GM10248 (cell line): ENCODE measurements at regions of chr10 and their contacts with region 1.

Region 1: DNA sequence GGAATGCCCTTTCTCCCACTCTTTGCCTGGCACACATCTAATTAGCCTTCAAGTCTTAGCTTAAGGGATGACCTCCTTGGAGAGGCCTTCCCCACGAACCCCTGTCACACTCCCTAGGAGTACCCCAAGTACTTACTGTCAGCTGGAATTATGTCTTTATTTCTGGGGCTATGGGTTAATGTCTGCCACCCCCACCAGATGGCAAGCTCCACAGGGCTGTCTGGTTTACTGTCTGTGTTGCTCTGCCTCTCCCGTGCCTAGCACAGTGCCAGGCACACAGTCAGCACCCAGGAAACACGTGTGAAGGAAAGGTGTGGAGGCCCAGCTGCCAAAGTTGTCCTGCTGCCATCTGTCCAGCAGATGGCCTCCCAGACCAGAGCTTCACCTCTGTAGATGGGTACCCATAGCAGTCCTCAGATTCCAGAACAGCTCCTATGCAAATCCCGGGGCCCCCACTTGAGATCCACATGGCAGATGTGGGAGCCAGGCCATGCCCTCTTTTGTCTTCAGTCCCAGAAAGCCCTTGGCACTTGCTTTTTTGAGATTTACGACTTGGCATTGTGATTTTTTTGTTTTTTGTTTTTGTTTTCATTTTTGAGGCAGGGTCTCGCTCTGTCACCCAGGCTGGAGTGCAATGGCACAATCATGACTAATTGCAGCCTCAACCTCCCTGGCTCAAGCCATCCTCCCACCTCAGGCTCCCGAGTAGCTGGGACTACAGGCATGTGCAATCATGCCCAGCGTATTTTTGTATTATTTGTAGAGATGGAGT is 17.2 kb upstream of the PALD1 start:
- DNase-seq: peak; percentile 81
- CTCF ChIP-seq: peak; percentile 80

Region 2: DNA sequence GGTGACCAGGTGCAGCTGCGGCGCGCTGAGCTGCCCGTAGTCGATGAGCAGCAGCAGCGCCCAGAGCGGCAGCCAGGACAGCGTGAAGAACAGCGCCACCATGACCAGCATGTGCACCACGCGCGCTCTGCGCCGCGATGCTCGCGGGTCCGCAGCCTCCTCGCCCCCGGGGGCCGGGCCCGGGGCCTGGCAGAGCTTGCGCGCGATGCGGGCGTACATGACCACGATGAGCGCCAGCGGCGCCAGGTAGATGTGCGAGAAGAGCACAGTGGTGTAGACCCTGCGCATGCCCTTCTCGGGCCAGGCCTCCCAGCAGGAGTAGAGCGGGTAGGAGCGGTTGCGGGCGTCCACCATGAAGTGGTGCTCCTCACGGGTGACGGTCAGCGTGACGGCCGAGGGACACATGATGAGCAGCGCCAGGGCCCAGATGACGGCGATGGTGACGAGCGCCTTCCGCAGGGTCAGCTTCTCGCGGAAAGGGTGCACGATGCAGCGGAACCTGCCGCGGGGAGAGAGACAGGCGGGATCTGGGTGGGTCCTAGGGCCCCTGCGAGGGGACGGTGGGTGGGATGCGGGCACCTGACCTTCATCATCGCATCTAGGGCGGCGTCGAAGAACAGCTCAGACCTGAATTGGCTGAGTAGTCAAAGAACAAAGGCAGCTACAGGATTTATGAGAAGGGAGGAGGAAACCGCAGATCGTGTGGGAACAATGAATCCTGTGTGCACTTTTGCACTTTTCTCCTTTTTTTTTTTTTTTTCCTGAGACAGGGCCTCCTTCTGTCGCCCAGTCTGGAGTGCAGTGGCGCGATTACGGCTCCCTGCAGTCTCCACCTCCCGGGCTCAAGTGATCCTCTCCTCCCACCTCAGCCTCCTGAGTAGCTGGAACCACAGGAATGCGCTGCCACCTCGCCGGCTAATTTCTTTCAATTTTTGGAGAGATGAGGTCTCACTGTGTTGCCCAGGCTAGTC is 205.8 kb before region 1 on chr10:
- CTCF ChIA-PET with region 1: no interaction called
- POLR2A ChIA-PET with region 1: no interaction called
- DNase-seq: peak; percentile 40
- CTCF ChIP-seq: no peak

Region 3: GRCh38 chr10:70448236-70448635 is 13.2 kb before region 1 on chr10:
- CTCF ChIA-PET with region 1: interaction called, 19 read pairs
- POLR2A ChIA-PET with region 1: no interaction called
- DNase-seq: no peak
- CTCF ChIP-seq: no peak

Region 4: GRCh38 chr10:70478191-70479164 is 17.1 kb after region 1 on chr10 and contains the start of gene PALD1:
- CTCF ChIA-PET with region 1: interaction called, 42 read pairs
- POLR2A ChIA-PET with region 1: no interaction called
- DNase-seq: peak; percentile 68
- CTCF ChIP-seq: no peak

Region 5: GRCh38 chr10:70500812-70501301 is 39.5 kb after region 1 on chr10:
- CTCF ChIA-PET with region 1: interaction called, 12 read pairs
- POLR2A ChIA-PET with region 1: no interaction called
- DNase-seq: no peak
- CTCF ChIP-seq: no peak

Region 6: GRCh38 chr10:70540089-70540788 is 78.8 kb after region 1 on chr10:
- CTCF ChIA-PET with region 1: interaction called, 59 read pairs
- POLR2A ChIA-PET with region 1: no interaction called
- DNase-seq: peak; percentile 73
- CTCF ChIP-seq: peak; percentile 72